PC-9 (cell line): ENCODE measurements at regions of chr6 and their contacts with region 1.

Region 1: GRCh38 chr6:11343963-11344747 is 111.7 kb upstream of the NEDD9 start:
- DNase-seq: peak; percentile 85 to 98
- H3K4me3 ChIP-seq: no peak overlapping the region
- H3K27ac ChIP-seq: peak overlapping the region; percentile 82
- H3K4me1 ChIP-seq: peaks cover 45% of the 10 kb centered on the region
- H3K27me3 ChIP-seq: no peaks in the 10 kb centered on the region
- CTCF ChIP-seq: no peak

Region 2: DNA sequence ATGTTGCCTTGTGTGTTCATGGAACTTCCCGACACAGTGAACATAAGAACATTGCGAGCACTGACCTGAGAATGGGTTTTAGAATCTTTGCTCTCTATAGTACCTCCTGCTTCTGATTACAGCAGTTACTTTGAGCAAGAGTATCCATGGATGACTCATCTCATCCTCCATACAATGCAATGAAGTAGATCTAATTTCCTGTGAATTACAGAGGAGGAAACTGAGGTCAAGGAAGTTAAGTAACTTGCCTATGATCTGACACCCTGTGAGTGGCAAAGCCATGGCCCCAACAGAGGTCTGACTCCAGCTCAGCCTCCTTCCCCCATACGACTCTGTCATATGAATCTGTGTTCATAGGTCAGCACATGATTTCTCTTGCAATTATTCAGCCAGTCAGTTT is 1447.3 kb before region 1 on chr6:
- CTCF ChIA-PET with region 1: no interaction called
- POLR2A ChIA-PET with region 1: no interaction called
- intact Hi-C with region 1: no loop called
- DNase-seq: no peak
- H3K4me3 ChIP-seq: no peak overlapping the region
- H3K27ac ChIP-seq: no peak overlapping the region
- H3K4me1 ChIP-seq: no peaks in the 10 kb centered on the region
- H3K27me3 ChIP-seq: no peaks in the 10 kb centered on the region
- CTCF ChIP-seq: no peak

Region 3: DNA sequence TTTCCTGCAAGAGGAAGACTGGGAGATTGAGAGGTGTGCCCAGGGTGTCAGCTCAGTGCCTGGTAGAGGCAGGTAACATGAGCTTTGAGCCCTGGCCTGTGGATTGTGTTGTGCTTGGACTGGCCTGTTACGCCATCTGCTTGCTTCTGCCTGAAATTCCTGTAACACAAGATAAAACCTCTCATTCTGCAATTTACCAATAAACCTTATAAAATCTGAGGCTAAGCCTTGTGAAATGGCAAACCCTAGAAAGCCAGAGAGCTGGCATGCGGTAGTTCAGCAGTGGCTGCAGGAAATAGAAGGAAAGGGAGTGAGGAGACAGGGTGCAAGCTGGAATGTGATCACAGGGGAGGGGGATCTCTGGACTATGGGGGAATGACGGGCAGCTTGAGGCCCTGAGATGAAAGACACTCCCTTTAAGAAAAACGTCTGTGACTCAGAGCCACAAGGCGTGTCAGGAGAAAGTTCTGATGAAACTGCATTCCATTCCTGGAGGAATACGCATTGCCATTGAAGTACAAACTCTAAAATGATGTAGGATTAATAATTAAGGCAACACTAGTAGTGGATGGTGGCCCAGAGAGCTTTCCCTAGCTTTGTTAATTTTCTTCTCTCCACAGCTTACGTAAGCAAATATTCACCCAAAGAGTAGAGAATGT is 903.0 kb before region 1 on chr6:
- CTCF ChIA-PET with region 1: no interaction called
- POLR2A ChIA-PET with region 1: no interaction called
- intact Hi-C with region 1: loop called (anchors 5 kb)
- DNase-seq: peak; percentile 86 to 96
- H3K4me3 ChIP-seq: peak overlapping the region; percentile 25; the same call in 1 of the 2 replicates
- H3K27ac ChIP-seq: peak overlapping the region; percentile 96
- H3K4me1 ChIP-seq: peaks cover 16% of the 10 kb centered on the region
- H3K27me3 ChIP-seq: no peaks in the 10 kb centered on the region
- CTCF ChIP-seq: no peak; the same call in 1 of the 2 replicates

Region 4: GRCh38 chr6:11207199-11207968 is 136.8 kb before region 1 on chr6:
- CTCF ChIA-PET with region 1: no interaction called
- POLR2A ChIA-PET with region 1: no interaction called
- intact Hi-C with region 1: loop called (anchors 1 kb)
- DNase-seq: peak; percentile 84 to 98
- H3K4me3 ChIP-seq: no peak overlapping the region; the same call in 1 of the 2 replicates
- H3K27ac ChIP-seq: peak overlapping the region; percentile 92
- H3K4me1 ChIP-seq: peaks cover 36% of the 10 kb centered on the region
- H3K27me3 ChIP-seq: no peaks in the 10 kb centered on the region
- CTCF ChIP-seq: no peak

Region 5: GRCh38 chr6:11392778-11393507 is 48.8 kb after region 1 on chr6:
- CTCF ChIA-PET with region 1: interaction called, 7 read pairs
- POLR2A ChIA-PET with region 1: interaction called, 11 read pairs
- intact Hi-C with region 1: loop called (anchors 1 kb)
- DNase-seq: peak; percentile 75 to 77
- H3K4me3 ChIP-seq: no peak overlapping the region; the same call in 1 of the 2 replicates
- H3K27ac ChIP-seq: peak overlapping the region; percentile 89
- H3K4me1 ChIP-seq: peaks cover 63% of the 10 kb centered on the region
- H3K27me3 ChIP-seq: no peaks in the 10 kb centered on the region
- CTCF ChIP-seq: no peak

Region 6: GRCh38 chr6:11428895-11429294 is 84.7 kb after region 1 on chr6:
- CTCF ChIA-PET with region 1: no interaction called
- POLR2A ChIA-PET with region 1: no interaction called
- intact Hi-C with region 1: loop called (anchors 1 kb)
- DNase-seq: peak; percentile 47 to 89
- H3K4me3 ChIP-seq: no peak overlapping the region
- H3K27ac ChIP-seq: peak overlapping the region; percentile 80
- H3K4me1 ChIP-seq: peaks cover 90% of the 10 kb centered on the region
- H3K27me3 ChIP-seq: no peaks in the 10 kb centered on the region
- CTCF ChIP-seq: no peak

Region 7: GRCh38 chr6:11575408-11576033 is 231.4 kb after region 1 on chr6:
- CTCF ChIA-PET with region 1: no interaction called
- POLR2A ChIA-PET with region 1: no interaction called
- intact Hi-C with region 1: loop called (anchors 2 kb)
- DNase-seq: peak; percentile 75 to 86
- H3K4me3 ChIP-seq: no peak overlapping the region
- H3K27ac ChIP-seq: no peak overlapping the region
- H3K4me1 ChIP-seq: peaks cover 3% of the 10 kb centered on the region
- H3K27me3 ChIP-seq: no peaks in the 10 kb centered on the region
- CTCF ChIP-seq: peak; percentile 99